ENCODE measurements at regions of chr3 and their contacts with region 1.

Region 1: DNA sequence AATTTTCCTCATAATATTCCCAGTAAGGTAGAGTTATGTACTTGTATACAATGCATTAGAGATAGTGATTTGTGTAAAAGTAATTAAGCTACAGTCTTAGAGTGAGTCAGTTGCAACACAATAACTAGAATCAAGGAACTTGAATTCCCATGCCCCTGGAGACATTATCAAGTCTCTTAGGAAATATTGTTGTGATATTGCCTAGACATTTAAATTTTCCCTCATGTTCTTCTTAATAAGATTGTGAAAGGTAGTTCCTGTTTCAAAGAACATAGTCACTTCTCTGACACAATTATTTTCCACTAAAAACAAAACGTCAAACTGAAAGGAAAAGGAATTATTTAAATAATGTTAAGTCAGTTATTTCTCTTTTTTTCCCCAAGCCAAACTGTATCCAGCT is 13.0 kb upstream of the ATP1B3 start:
- DNase-seq: no peak
- H3K4me3 ChIP-seq: no peak overlapping the region
- H3K27ac ChIP-seq: no peak overlapping the region
- H3K4me1 ChIP-seq: no peaks in the 10 kb centered on the region
- H3K27me3 ChIP-seq: no peaks in the 10 kb centered on the region
- CTCF ChIP-seq: no peak

Region 2: DNA sequence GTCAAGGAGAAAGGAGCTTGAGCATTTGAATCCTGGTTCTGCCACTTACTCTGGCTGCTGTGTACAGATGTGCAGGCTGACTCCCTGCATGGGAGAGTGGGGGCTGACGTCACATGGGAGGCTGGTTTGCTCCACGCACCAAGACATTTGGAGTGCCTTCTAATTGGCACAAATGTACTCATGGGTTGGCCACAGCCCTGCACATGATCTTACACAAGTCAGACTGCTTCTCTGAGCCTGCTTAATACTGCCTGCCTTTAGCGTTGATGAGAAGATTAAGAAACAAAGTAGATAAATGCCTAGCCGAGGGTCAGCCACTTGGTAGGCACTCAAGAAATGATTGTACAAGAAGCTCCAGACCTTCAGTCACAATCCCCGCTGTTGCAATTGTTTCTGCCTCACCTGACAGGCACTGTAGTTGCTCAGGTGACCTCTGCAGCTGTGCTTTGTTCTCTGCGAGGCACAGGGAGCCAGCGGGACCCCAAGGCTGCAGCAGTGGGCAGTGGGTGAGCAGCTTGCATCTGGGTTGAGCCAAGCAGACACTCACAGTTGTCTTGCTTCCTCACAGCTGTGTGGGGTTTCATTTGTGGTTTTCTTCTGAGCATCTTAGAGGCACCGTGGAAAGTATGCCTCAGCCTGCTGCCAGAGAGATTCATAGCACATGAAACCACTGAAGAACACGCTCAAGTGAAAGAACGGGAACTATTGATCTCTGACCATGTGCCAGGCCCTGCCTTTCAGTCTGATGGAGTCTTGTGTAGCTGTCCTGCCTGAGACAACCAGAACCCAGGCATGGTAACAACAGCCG is 67.2 kb before region 1 on chr3:
- intact Hi-C with region 1: loop called (anchors 10 kb)
- DNase-seq: peak; percentile 43
- H3K4me3 ChIP-seq: no peak overlapping the region
- H3K27ac ChIP-seq: peak overlapping the region; percentile 73
- H3K4me1 ChIP-seq: no peaks in the 10 kb centered on the region
- H3K27me3 ChIP-seq: no peaks in the 10 kb centered on the region
- CTCF ChIP-seq: no peak